ENCODE measurements at regions of chr10 and their contacts with region 1.

Region 1: DNA sequence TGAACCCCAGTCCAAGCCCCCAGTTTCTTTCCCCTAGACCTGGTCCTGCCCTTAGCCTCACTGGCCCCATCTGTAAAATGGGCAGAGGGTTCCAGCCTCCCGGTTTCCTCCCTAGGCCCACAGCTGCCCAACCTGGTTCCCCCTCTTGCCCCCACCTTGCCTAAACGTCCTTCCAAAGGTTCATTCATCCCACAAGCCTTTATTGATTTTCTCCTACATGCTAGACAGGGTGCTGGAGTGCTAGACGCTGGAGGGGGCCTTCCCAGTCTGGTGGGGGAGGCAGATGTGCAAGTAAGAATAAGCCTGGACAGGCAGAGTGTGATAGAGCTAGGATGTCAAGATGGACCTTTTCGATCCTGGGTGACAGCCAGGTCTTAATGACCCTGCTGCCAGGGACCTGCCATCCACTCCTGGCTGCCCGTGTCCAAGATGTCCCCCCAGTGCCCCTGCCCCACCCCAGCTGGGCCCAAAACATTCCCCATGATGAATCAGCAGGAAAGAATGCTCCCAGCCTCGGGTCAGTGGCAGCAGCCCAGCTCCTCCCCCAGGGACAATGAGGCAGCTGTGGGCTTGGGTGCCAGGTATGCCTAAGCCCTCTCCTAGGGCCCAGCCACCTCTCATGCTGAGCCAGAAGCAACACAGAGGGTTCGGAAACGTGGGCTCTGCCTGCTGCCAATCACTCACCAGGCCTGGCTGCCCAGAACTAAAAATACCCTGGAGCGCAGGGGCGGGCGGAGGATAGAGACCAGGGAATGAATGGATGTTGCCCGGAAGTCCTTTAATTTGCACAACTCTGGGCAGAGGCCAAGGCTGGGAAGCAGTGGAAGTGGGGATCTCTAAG is 1.3 kb upstream of the LOXL4 start:
- DNase-seq: peak; percentile 93 to 96
- ATAC-seq: peak; percentile 88
- H3K4me3 ChIP-seq: no peak overlapping the region
- H3K27ac ChIP-seq: peak overlapping the region; percentile 40 to 91
- H3K4me1 ChIP-seq: no peaks in the 10 kb centered on the region
- H3K27me3 ChIP-seq: no peaks in the 10 kb centered on the region

Region 2: DNA sequence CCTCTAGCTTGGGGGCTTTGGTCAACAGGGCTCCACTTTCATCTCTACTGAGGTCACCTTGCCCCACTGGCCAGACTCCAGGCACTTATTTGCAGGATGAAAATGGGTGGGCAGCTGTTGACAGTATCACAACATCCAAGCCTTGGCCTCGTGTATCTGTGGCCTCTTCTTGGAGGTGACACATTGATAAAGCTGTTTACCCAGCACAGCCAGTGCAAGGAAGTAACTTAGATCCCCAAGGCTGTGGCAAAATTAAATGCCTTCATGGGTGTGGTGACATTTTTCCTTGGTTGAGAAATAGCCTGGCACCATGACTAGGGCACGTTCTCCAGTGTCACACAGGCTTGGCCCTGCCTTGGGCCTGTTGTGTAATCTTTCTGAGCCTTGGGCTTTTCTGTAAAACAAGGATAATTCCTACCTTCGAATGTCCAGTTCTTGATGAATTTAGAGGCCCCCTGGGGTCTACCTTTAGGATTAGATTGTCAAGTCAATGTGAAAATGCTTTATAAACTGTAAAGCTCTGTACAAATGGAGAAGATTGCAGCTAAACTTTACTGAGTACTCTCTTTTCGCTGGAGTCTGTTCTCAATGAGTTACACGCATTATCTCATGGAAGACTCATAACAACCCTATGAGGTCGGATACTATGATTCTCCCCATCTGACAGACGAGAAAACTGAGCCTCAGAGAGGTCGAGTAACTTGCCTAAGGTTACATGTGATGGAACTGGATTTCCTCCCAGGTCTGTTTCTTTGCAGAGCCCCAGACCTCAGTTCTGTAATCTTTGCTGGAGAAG is 45.4 kb after region 1 on chr10:
- intact Hi-C with region 1: loop called in 1 of 2 experiments (anchors 2 kb)
- DNase-seq: peak in 1 of 2 donors; percentile 69
- ATAC-seq: peak; percentile 71
- H3K4me3 ChIP-seq: no peak overlapping the region
- H3K27ac ChIP-seq: no peak overlapping the region
- H3K4me1 ChIP-seq: no peaks in the 10 kb centered on the region
- H3K27me3 ChIP-seq: no peaks in the 10 kb centered on the region

Measured in aorta (tissue), 5 donors.